Posterior vena cava (tissue), 2 donors: ENCODE measurements at regions of chr17 and their contacts with region 1.

Region 1: GRCh38 chr17:18132711-18133110 is 24.2 kb downstream of the MYO15A start:
- DNase-seq: no peak

Region 2: GRCh38 chr17:18309202-18309601 is 176.5 kb after region 1 on chr17:
- intact Hi-C with region 1: loop called in 1 of 2 experiments (anchors 5 kb)
- DNase-seq: no peak